Activated CD4-positive, alpha-beta memory T cell treated with anti-CD3 and anti-CD28 coated beads for 36 hours (primary cell): ENCODE measurements at regions of chr6 and their contacts with region 1.

Region 1: DNA sequence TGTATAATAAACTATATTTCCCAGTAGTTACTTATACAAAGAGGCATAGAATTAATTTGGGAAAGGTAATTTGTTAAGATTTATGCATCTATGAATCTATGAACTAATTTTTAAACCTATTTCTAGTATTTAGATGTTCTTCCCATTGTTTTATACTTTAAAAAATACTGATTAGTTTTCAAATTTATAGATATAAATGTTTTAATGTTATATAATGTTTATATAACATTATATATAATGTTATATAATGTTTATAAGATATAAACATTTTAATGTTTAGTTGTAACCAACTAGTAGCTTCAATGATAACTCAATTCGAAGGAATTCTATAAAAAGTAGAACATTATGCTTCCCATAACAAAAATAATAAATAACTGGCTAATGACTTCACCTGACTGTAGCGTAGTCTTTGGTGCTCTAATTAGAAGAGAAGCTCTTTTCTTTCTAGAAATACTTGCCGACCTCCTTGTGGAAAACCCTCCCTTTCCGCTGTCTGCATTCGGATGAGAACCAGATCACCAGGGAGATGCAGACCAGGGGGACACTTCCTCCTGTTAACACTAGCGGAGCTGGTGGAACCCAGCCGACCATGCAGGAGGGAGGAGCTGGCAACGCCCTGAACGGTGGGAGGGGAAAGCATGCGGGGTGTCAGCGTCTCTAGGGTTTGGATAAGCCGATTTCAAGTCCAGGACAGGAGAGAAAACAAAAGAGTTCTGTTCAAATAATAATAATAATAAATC is 158.4 kb downstream of the OR2B2 start:
- DNase-seq: peak; percentile 87
- H3K4me3 Mint-ChIP-seq: peak overlapping the region; percentile 83
- H3K27ac Mint-ChIP-seq: peak overlapping the region; percentile 69
- H3K4me1 Mint-ChIP-seq: peaks cover 33% of the 10 kb centered on the region
- H3K27me3 Mint-ChIP-seq: peaks cover 3% of the 10 kb centered on the region

Region 2: GRCh38 chr6:26553635-26554446 is 1200.0 kb before region 1 on chr6:
- CTCF ChIA-PET with region 1: interaction called, 3 read pairs
- POLR2A ChIA-PET with region 1: no interaction called
- intact Hi-C with region 1: loop called (anchors 5 kb)
- DNase-seq: peak; percentile 89
- H3K4me3 Mint-ChIP-seq: no peak overlapping the region
- H3K27ac Mint-ChIP-seq: no peak overlapping the region
- H3K4me1 Mint-ChIP-seq: peaks cover 23% of the 10 kb centered on the region
- H3K27me3 Mint-ChIP-seq: no peaks in the 10 kb centered on the region

Region 3: DNA sequence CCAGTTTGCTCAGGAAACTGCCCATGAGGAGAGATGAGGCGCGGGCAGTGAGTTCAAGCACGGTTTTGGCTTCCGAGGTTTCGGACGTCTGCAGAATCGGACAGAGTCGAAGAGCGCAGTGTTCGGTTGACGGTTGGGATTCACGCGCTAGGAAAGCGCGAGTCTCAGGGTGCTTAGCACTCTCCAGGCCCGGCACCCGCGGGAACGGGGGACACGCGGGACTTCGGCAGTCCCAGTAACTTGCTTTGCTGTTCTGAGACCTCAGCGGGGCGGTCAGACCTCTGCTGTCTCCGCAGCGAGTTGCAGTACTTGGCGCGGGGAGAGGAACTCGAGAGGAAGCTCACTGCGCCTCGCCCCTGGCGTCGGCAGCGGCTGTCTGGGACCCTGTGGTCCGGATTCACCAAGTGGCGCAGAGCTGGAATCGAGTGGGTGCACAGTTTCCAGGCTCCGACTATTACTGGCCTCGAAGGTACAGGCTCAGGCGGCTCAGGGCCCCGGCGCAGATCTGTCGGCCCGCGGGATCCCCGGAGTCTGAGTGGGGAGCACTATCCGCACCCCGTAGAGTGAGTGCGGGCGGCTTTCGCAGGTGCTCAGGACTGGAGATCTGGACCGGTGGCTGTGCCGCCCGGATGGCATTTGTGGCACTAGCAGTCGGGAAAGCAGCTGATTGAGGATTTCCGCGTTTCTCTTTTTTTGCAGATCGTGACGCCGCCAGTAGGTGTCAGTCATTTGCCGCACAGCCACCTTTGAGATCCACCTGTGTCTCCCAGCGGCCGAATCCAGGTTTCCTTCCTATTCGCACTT is 441.5 kb before region 1 on chr6 and contains the start of gene POM121L2:
- CTCF ChIA-PET with region 1: interaction called, 7 read pairs
- POLR2A ChIA-PET with region 1: no interaction called
- intact Hi-C with region 1: loop called (anchors 2 kb)
- DNase-seq: peak; percentile 78
- H3K4me3 Mint-ChIP-seq: peak within 1 kb of the TSS; percentile 74
- H3K27ac Mint-ChIP-seq: no peak within 1 kb of the TSS
- H3K4me1 Mint-ChIP-seq: peaks cover 5% of the 10 kb centered on the region
- H3K27me3 Mint-ChIP-seq: peaks cover 53% of the 10 kb centered on the region
- total RNA-seq, gene POM121L2: not detected

Region 4: DNA sequence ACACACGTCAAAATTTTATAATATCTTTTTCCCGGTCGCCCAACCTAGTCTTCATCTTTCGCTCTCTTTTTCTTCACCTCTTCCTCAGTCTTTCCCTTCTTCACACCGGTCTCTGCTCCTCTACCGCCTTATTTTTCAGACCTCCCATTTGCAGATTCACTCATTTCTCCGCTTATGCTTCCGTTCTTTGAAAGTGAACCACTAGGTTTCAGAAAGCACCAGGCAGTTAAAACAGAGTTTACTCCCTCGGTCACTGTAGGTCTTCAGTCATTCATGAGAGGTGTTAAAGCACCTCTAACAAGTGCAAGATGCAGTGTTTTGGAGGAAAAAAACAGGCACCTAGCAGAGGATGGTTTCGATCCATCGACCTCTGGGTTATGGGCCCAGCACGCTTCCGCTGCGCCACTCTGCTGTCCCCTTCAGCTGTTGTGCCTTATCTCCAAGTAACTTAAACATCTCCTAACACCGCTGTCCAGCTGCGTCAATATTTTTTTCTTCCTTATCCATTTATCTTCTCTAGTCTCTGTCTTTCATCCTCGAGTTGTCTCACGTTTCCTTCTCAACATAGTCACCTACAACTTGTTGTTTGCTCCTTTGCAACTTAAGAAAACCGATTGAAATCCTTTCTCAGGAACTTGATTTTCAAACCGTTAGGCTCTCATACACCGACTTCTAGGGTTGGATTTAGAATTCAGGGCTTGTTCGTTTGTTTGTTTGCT is 161.2 kb before region 1 on chr6:
- CTCF ChIA-PET with region 1: interaction called, 3 read pairs
- POLR2A ChIA-PET with region 1: no interaction called
- intact Hi-C with region 1: loop called (anchors 2 kb)
- DNase-seq: peak; percentile 71
- H3K4me3 Mint-ChIP-seq: no peak overlapping the region
- H3K27ac Mint-ChIP-seq: no peak overlapping the region
- H3K4me1 Mint-ChIP-seq: no peaks in the 10 kb centered on the region
- H3K27me3 Mint-ChIP-seq: peaks cover 25% of the 10 kb centered on the region

Region 5: DNA sequence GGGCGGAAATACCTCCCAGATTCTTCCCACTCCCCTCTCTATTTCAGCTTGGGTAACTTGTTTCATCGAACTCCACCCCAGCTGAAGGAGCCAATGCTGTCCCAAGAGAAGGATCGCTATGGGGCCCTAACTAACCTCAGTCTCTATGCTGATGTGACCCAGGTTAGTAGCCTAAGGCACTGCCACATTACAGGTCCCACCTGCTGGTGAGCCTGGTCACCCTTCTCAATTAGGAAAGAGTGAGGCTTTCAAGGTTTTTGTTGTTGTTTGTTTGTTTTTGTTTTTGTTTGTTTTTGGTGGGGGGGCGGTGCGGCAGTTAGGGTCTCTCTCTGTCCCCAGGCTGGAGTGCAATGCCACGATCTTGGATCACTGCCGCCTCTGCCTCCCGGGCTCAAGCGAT is 10.0 kb before region 1 on chr6:
- CTCF ChIA-PET with region 1: interaction called, 21 read pairs
- POLR2A ChIA-PET with region 1: no interaction called
- intact Hi-C with region 1: loop called (anchors 2 kb)
- DNase-seq: no peak
- H3K4me3 Mint-ChIP-seq: no peak overlapping the region
- H3K27ac Mint-ChIP-seq: no peak overlapping the region
- H3K4me1 Mint-ChIP-seq: peaks cover 5% of the 10 kb centered on the region
- H3K27me3 Mint-ChIP-seq: peaks cover 34% of the 10 kb centered on the region